Aorta (tissue), 5 donors: ENCODE measurements at regions of chr6 and their contacts with region 1.

Region 1: DNA sequence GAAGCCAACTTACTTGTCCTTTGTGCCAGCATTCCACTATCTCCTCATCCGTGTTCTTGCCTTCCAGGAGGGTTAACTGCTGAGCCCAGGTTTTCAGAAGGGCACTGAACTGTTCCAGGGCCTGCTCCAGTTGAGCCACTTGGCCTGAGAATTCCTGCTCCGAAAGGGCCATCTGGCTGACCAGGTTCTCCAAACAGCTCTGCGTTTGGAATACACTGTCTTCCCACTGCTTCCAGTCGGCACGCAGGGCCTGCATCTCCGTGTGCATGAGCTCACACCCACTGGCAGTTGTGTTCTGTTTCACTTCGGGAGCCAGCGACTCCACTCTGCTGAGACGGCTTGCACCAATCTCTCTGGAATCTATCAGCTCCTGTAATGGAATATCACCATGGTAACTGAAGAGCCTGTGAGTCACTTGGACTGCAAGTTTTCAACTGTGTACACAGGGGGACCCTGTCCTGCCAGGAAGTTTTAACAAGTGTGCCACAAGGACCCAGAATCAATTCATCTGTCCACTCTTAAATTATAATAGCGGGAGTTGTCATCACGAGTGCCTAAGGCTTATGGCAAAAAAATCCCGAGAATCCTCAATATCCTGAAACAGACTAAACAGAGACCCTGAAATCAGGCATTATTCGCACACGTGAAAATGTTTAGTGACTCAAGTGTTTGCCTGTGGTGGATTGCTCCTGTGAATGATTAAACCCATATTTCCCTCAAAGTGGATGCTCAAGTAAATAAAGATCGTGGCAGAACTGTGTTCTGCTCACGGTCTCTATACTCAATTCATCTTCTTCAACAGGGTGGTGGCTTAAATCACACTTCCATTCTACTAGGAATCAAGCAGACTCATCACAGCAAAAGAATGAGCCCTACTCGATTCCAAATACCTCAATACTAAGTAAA is 255.9 kb downstream of the SYNE1 start:
- DNase-seq: peak; percentile 89 to 92
- ATAC-seq: peak; percentile 96
- H3K4me3 ChIP-seq: peak overlapping the region; percentile 86 to 91
- H3K27ac ChIP-seq: peak overlapping the region; percentile 98 to 100
- H3K4me1 ChIP-seq: peaks cover 0 to 2% of the 10 kb centered on the region in 2 donors
- H3K27me3 ChIP-seq: no peaks in the 10 kb centered on the region

Region 2: DNA sequence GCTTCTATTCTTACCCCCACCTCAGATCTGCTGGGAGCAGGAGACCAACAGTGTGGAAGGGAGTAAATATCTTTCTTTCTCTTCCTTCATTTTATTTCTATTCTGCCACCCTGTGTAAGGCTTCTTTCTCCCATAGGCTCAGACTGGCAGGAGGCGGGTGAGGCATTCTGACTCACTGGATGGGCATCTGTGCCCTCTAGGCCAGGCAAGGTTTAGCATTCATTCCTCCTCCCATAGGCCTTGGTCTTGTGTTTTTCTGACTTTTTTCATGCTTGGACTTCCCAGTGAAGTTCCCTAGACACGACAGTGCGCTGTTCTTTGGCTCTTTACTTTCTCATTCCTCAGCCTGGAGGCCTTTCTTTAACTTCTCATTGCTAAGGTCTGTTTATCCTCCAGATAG is 20.7 kb after region 1 on chr6:
- intact Hi-C with region 1: loop called in 1 of 2 experiments (anchors 2 kb)
- DNase-seq: peak in 1 of 2 donors; percentile 56
- ATAC-seq: peak; percentile 68
- H3K4me3 ChIP-seq: no peak overlapping the region
- H3K27ac ChIP-seq: peak overlapping the region; percentile 46 to 93
- H3K4me1 ChIP-seq: peaks cover 5 to 8% of the 10 kb centered on the region in 2 donors
- H3K27me3 ChIP-seq: no peaks in the 10 kb centered on the region

Region 3: DNA sequence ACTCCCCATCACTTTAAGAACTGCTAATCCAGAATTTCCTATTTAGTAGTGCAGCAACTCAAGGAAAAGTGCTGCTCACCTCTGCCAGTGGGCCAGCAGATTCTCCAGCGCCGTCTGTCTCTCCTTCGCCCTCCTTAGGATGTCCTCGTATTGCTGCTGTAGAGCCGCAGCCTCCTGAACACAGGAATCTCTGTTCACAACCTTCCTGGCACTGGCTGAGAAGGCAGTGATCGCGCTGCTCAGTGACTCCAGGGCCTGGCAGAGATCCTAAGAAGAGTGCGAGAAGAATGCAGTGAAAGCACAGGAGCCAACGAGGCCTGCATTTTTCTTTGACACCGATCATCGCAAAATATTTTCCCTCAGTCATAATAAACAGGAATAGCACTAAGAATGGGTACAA is 46.9 kb after region 1 on chr6:
- intact Hi-C with region 1: loop called in 1 of 2 experiments (anchors 5 kb)
- DNase-seq: peak in 1 of 2 donors; percentile 61
- ATAC-seq: no peak
- H3K4me3 ChIP-seq: peak overlapping the region in 1 of 2 donors; percentile 59
- H3K27ac ChIP-seq: peak overlapping the region in 1 of 2 donors; percentile 17
- H3K4me1 ChIP-seq: peaks cover 0 to 3% of the 10 kb centered on the region in 2 donors
- H3K27me3 ChIP-seq: no peaks in the 10 kb centered on the region